ENCODE measurements at regions of chr11 and their contacts with region 1.

Region 1: DNA sequence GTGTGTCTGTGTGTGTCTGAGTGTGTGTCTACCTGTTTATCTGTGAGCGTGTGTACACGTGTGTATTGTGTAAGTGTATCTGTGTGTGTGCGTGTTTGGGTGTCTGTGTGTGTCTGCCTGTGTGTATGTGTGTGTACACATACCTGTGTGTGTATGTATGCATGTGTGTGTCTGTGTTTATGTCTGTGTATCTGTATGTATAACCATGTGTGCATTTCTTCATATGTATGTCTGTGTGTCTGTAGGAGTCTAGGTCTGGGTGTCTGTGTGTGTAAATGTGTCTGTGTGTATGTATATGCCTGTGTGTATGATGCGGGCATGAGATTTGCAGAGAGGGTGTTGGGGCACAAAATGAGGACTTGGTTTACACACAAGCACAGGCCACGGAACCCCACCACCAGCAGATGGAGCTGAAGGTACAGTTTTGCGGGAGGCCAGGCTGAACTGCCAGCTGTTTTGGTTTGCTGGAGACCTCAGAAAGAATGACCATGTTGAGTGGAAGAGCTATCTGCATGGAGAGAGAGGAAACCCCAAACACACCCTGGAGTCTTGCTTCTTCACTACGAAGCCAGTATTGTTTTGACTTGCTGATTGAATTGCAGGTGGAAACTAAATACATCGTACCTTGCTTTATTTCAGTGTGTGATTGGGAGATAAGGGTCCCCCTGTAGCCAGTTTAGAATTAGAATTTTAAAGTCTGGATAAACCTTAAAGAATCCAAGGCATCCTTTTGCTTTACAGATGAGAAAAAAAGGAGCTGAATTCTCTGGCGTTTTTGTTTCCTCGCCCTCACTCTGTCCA is 497.2 kb downstream of the NTM start:
- DNase-seq: no peak

Region 2: GRCh38 chr11:132126973-132127899 is 259.6 kb after region 1 on chr11:
- intact Hi-C with region 1: loop called (anchors 2 kb)
- DNase-seq: no peak

Region 3: DNA sequence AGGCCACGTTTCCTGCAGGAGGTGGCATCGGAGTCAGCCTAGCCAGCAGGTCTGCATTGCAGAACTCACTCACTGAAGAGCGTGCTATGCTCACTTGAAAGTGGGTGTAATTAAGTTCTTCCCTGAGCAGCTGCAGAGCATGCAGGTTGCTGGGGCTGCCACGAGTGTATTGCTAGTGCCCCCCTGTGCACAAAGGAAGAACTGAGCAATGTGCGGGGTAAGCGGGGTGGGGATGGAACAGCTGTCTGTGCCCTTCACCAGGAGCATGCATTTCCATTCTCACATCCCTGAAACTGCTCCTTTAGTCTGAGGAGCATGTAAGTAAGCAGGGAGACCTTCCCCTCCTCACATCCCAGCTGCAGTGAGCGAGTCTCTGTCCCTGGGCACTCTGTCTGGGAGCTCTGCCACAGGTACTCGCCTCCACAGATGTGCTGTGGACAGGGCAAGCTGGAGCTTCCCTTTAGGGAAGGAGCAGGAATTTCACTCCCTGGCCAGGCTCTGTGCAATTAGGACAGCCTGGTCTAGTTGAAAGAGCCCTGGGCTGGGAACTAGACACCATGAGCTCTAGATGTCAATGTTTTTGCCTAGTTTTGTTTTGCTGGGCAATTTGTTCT is 534.5 kb after region 1 on chr11:
- intact Hi-C with region 1: loop called (anchors 5 kb)
- DNase-seq: no peak

Region 4: DNA sequence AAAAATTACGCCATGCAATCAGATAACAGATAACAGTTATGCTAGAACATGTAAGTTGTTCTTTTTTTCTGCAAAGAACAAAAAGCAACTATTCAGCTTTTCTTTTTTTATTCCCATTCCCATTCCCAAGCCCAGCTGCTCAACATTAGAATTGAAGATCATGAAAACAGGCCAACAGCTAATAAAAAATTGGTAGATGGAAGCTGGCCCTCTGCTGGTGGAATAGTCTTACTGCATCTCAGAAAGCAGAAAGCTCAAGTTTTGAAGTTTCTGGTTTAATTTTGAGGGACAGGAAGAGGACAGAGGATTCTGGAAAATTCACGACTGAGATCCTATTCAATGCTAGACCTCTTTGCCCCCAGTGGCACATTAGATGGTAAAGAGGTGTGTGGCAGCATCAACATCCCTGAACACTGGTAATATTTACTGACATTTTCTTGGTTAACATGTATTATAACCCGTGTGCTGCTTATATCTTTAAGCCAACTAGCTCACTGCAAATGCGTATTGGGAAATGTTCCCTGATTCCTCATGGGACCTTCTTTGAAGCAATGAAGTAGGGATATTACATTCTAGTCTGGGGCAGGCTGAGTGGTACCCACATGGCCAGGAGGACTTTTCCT is 1073.5 kb after region 1 on chr11:
- intact Hi-C with region 1: loop called (anchors 5 kb)
- DNase-seq: no peak

Region 5: GRCh38 chr11:133064152-133064877 is 1196.7 kb after region 1 on chr11:
- intact Hi-C with region 1: loop called (anchors 5 kb)
- DNase-seq: no peak